K562 (cell line): ENCODE measurements at regions of chr17 and their contacts with region 1.

Region 1: GRCh38 chr17:27181935-27182334 is 112.0 kb upstream of the WSB1 start:
- DNase-seq: no peak
- ATAC-seq: no peak
- H3K4me3 ChIP-seq: no peak overlapping the region
- H3K27ac ChIP-seq: no peak overlapping the region
- H3K4me1 ChIP-seq: no peaks in the 10 kb centered on the region
- H3K27me3 ChIP-seq: no peaks in the 10 kb centered on the region
- CTCF ChIP-seq: no peak
- EP300 ChIP-seq: no peak
- POLR2A ChIP-seq: no peak
- RAD21 ChIP-seq: no peak

Region 2: GRCh38 chr17:26962255-26963162 is 219.4 kb before region 1 on chr17:
- CTCF ChIA-PET with region 1: no interaction called
- POLR2A ChIA-PET with region 1: no interaction called
- in situ Hi-C with region 1: no loop called
- intact Hi-C with region 1: no loop called
- DNase-seq: peak in 2 of 4 experiments; percentile 1
- ATAC-seq: no peak
- H3K4me3 ChIP-seq: peak overlapping the region; percentile 24
- H3K27ac ChIP-seq: no peak overlapping the region
- H3K4me1 ChIP-seq: peaks cover 0 to 7% of the 10 kb centered on the region in 2 experiments; a peak in 1 of 5 replicates
- H3K27me3 ChIP-seq: no peaks in the 10 kb centered on the region
- CTCF ChIP-seq: no peak
- EP300 ChIP-seq: no peak
- POLR2A ChIP-seq: no peak
- RAD21 ChIP-seq: no peak

Region 3: GRCh38 chr17:27106347-27106981 is 75.5 kb before region 1 on chr17:
- CTCF ChIA-PET with region 1: no interaction called
- POLR2A ChIA-PET with region 1: no interaction called
- in situ Hi-C with region 1: no loop called
- intact Hi-C with region 1: loop called (anchors 10 kb)
- DNase-seq: peak in 2 of 4 experiments; percentile 49 to 87
- ATAC-seq: peak; percentile 75
- H3K4me3 ChIP-seq: no peak overlapping the region
- H3K27ac ChIP-seq: peak overlapping the region; percentile 83
- H3K4me1 ChIP-seq: peaks cover 0 to 32% of the 10 kb centered on the region in 2 experiments; a peak in 4 of 5 replicates
- H3K27me3 ChIP-seq: no peaks in the 10 kb centered on the region
- CTCF ChIP-seq: no peak
- EP300 ChIP-seq: no peak
- POLR2A ChIP-seq: peak; percentile 45
- RAD21 ChIP-seq: no peak

Region 4: DNA sequence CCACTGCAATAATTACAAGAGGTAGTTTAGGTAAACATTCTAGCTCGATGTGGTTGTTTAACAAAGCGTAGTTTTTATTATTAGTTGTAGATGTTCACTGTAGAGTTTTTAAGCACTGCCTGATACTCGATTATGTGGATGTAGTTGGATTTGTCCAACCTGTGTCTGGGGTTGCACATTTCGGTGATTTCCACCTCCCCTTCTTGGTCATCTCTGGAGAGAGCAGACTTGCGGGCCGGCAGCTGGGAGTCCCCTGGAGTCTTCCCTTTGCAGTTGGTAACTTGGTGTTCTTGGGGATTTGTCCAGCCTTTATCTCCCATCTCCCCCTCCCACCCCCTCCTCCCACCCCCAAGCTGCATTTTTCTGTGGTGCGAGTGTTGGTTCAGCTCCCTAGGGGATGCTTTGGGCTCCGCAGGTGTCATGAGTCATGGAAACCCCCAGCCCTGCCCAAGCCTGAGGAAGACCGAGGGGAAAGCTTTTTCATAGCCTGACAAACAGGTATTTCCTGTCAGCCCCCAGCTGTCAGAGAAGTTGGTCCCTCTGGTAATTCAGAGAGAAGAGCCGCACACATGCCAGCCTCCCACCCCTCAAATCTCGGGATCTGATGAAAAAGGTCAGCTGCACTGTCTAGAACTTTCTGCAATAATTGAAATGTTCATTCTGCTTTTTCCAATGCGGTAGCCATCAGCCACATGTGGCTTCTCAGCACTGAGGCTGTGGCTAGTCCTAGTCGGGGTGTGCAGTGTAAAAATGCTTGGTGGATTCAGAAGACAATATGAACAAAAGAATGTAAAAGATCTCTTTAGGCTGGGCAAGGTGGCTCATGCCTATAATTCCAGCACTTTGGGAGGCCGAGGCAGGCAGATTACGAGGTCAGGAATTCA is 324.7 kb after region 1 on chr17:
- CTCF ChIA-PET with region 1: no interaction called
- POLR2A ChIA-PET with region 1: no interaction called
- in situ Hi-C with region 1: no loop called
- intact Hi-C with region 1: no loop called
- DNase-seq: peak in 2 of 4 experiments; percentile 33 to 34
- ATAC-seq: peak; percentile 20; the same call in 2 of the 3 replicates
- H3K4me3 ChIP-seq: no peak overlapping the region
- H3K27ac ChIP-seq: no peak overlapping the region
- H3K4me1 ChIP-seq: peaks cover 10 to 14% of the 10 kb centered on the region in 2 experiments; a peak in 4 of 5 replicates
- H3K27me3 ChIP-seq: no peaks in the 10 kb centered on the region
- CTCF ChIP-seq: no peak
- EP300 ChIP-seq: no peak
- POLR2A ChIP-seq: no peak
- RAD21 ChIP-seq: no peak